Colonic mucosa (tissue), 4 donors: ENCODE measurements at regions of chr11 and their contacts with region 1.

Region 1: GRCh38 chr11:118907051-118908042 is 18.4 kb downstream of the BCL9L start:
- DNase-seq: peak; percentile 94
- H3K4me3 ChIP-seq: no peak overlapping the region
- H3K27ac ChIP-seq: no peak overlapping the region
- H3K4me1 ChIP-seq: peaks cover 22% of the 10 kb centered on the region
- H3K27me3 ChIP-seq: no peaks in the 10 kb centered on the region
- CTCF ChIP-seq: peak; percentile 91

Region 2: DNA sequence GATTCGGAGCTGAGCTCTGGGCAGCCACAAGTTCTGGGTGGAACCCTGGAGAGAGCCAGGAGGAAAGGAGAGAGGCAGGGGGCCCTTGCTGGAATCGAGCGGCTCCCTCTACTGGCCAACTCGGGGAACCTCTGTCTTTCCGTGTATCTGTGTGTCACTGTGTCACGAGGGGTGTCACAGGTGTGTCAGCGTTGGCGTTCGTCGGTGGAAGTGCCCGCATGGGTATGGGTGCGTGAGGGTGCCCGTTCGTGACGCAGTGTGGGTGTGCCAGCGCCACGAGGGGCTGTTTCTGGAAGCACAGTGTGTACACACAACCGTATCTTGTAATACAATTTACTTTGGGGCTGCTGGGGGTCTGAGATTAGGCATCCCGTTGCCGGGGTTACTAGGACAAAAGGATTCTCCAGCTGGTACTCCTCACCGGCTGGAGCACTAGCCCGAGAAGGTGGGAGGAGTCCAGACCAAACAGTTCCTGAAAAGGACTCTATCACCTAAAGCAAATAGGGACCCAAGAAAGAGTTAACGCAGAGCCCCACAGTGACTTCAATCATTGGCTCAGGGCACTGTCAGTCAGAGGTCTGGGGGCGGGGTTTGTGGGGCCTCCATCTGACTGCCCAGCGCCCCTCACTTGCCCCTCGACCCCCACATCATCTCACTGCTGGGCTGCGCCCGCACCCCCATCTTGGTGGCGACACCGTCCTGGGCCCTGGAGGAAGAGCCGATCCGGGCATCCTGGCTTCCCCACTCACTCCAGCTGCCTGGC is 20.9 kb after region 1 on chr11:
- intact Hi-C with region 1: loop called (anchors 2 kb)
- DNase-seq: peak; percentile 97
- H3K4me3 ChIP-seq: peak overlapping the region; percentile 76
- H3K27ac ChIP-seq: peak overlapping the region; percentile 100
- H3K4me1 ChIP-seq: peaks cover 9% of the 10 kb centered on the region
- H3K27me3 ChIP-seq: no peaks in the 10 kb centered on the region
- CTCF ChIP-seq: peak; percentile 84

Region 3: GRCh38 chr11:118956094-118956846 is 48.9 kb after region 1 on chr11 and contains the start of gene UPK2:
- intact Hi-C with region 1: loop called (anchors 2 kb)
- DNase-seq: peak; percentile 90
- H3K4me3 ChIP-seq: no peak within 1 kb of the TSS
- H3K27ac ChIP-seq: no peak within 1 kb of the TSS
- H3K4me1 ChIP-seq: no peaks in the 10 kb centered on the region
- H3K27me3 ChIP-seq: no peaks in the 10 kb centered on the region
- CTCF ChIP-seq: peak; percentile 91
- total RNA-seq, gene UPK2: not detected